Activated T-helper 1 cell treated with anti-CD3 and anti-CD28 coated beads, Interleukin-12 subunit alpha, Interleukin-12 subunit beta, Interleukin-2, Interleukin-4 antibody, amounts not matched to agents 30 ng/mL and 10 ng/mL and 1 ng/mL, durations not matched to agents 14 hours and 24 hours and 36 hours (primary cell): ENCODE measurements at regions of chr10 and their contacts with region 1.

Region 1: DNA sequence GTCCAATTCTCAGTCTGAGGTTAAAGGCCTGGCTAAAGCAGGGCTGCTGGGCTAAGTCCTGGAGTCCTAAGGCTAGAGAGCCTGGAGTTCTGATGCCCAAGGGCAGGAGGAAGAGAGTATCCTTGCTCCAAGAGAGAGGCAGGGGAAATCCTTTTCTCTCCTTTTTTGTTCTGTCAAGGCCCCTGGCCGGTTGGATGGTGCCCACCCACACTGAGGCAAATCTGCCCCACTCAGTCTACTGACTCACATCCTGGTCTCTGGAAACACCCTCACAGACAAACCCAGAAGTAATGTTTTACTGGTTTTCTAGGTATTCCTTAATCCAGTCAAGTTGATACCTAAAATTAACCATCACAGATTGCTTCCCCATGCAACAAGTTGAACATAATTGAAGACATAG is 23.0 kb downstream of the ZNF518A start:
- DNase-seq: no peak
- H3K4me3 Mint-ChIP-seq: no peak overlapping the region
- H3K27ac Mint-ChIP-seq: no peak overlapping the region
- H3K4me1 Mint-ChIP-seq: peaks cover 10% of the 10 kb centered on the region
- H3K27me3 Mint-ChIP-seq: no peaks in the 10 kb centered on the region

Region 2: GRCh38 chr10:96138102-96138501 is 15.0 kb before region 1 on chr10:
- intact Hi-C with region 1: loop called (anchors 2 kb)
- DNase-seq: no peak
- H3K4me3 Mint-ChIP-seq: no peak overlapping the region
- H3K27ac Mint-ChIP-seq: peak overlapping the region; percentile 32
- H3K4me1 Mint-ChIP-seq: peaks cover 38% of the 10 kb centered on the region
- H3K27me3 Mint-ChIP-seq: no peaks in the 10 kb centered on the region